ENCODE measurements at regions of chr1 and their contacts with region 1.

Region 1: DNA sequence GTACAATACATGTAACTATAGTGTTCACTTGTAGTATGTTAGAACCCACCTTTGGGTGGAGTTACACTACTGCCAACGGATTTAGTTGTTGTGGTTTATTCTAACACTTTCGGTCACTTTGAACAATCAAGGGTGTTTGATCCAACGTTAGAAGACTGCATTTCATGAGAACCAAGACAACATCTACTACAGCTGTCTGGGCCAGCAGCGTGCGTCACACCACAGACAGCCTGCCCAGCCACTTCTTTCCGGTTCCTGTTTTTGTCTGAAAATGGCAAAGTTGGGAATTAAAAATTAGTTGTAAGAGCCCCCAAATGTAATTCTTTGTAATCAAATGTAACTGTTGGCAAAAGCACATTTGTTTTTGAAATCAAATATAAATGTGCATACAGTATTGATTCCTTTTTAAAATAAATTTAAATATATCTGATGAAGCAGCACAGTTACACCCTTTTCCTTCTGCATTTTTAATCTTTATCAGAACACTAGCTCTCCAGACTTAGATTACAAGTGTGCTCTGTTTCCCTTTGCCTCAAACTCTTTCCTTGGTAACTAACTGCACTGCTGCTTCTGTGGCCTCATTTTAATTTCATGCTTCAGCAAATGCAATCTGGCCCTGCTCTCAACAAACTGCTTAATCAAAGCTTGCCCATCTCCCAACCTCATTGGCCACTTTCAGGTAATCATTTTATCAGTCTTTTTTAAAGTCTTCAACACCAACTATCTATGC is 86.6 kb upstream of the DPH5 start:
- DNase-seq: peak; percentile 84 to 91 (median 88)
- H3K4me3 ChIP-seq: peak overlapping the region in 1 of 2 donors; percentile 3
- H3K4me3 Mint-ChIP-seq: peak overlapping the region; percentile 52 to 87 (median 70)
- H3K27ac ChIP-seq: peak overlapping the region; percentile 60
- H3K27ac Mint-ChIP-seq: peak overlapping the region; percentile 91 to 100 (median 98)
- H3K4me1 ChIP-seq: peaks cover 42% of the 10 kb centered on the region
- H3K4me1 Mint-ChIP-seq: peaks cover 39 to 51% (median 47%) of the 10 kb centered on the region in 4 donors
- H3K27me3 ChIP-seq: no peaks in the 10 kb centered on the region
- H3K27me3 Mint-ChIP-seq: no peaks in the 10 kb centered on the region

Region 2: GRCh38 chr1:100928128-100928527 is 184.1 kb before region 1 on chr1:
- CTCF ChIA-PET with region 1: interaction called, 5 read pairs
- POLR2A ChIA-PET with region 1: interaction called, 12 read pairs
- intact Hi-C with region 1: loop called (anchors 2 kb)
- DNase-seq: no peak
- H3K4me3 ChIP-seq: peak overlapping the region in 1 of 2 donors; percentile 39
- H3K4me3 Mint-ChIP-seq: no peak overlapping the region
- H3K27ac ChIP-seq: peak overlapping the region; percentile 50
- H3K27ac Mint-ChIP-seq: no peak overlapping the region
- H3K4me1 ChIP-seq: peaks cover 95% of the 10 kb centered on the region
- H3K4me1 Mint-ChIP-seq: peaks cover 38 to 64% (median 49%) of the 10 kb centered on the region in 4 donors
- H3K27me3 ChIP-seq: no peaks in the 10 kb centered on the region
- H3K27me3 Mint-ChIP-seq: no peaks in the 10 kb centered on the region

Region 3: DNA sequence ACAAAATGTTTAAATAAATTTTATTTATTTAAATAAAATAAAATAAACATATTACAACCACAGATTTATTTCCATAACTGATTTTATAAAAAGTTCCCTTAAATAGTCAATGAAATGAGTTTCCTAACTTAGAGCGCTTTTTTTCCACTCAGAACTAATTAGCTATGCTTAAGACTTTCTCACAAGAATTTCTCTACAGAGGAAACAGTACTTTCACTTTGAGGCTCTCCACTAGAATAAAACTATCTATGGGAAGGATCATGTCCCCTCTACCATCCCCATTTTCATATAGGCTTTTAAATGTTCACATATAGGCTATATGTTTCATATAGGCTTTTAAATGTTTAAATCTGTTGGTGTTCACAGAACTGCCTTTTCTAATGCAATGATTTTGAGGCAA is 46.6 kb before region 1 on chr1:
- CTCF ChIA-PET with region 1: no interaction called
- POLR2A ChIA-PET with region 1: interaction called, 3 read pairs
- intact Hi-C with region 1: loop called (anchors 5 kb)
- DNase-seq: no peak
- H3K4me3 ChIP-seq: no peak overlapping the region
- H3K4me3 Mint-ChIP-seq: peak overlapping the region in 7 of 8 donors; percentile 8 to 74 (median 64)
- H3K27ac ChIP-seq: no peak overlapping the region
- H3K27ac Mint-ChIP-seq: peak overlapping the region; percentile 64 to 93 (median 85)
- H3K4me1 ChIP-seq: peaks cover 42% of the 10 kb centered on the region
- H3K4me1 Mint-ChIP-seq: peaks cover 35 to 57% (median 44%) of the 10 kb centered on the region in 4 donors
- H3K27me3 ChIP-seq: no peaks in the 10 kb centered on the region
- H3K27me3 Mint-ChIP-seq: no peaks in the 10 kb centered on the region

Region 4: GRCh38 chr1:101128211-101128727 is 16.1 kb after region 1 on chr1:
- CTCF ChIA-PET with region 1: interaction called, 4 read pairs
- POLR2A ChIA-PET with region 1: interaction called, 21 read pairs
- intact Hi-C with region 1: loop called (anchors 2 kb)
- DNase-seq: peak in 4 of 5 donors; percentile 17 to 42 (median 26)
- H3K4me3 ChIP-seq: no peak overlapping the region
- H3K4me3 Mint-ChIP-seq: peak overlapping the region; percentile 56 to 85 (median 72)
- H3K27ac ChIP-seq: peak overlapping the region; percentile 50
- H3K27ac Mint-ChIP-seq: peak overlapping the region; percentile 68 to 96 (median 89)
- H3K4me1 ChIP-seq: peaks cover 52% of the 10 kb centered on the region
- H3K4me1 Mint-ChIP-seq: peaks cover 45 to 73% (median 58%) of the 10 kb centered on the region in 4 donors
- H3K27me3 ChIP-seq: no peaks in the 10 kb centered on the region
- H3K27me3 Mint-ChIP-seq: no peaks in the 10 kb centered on the region

Region 5: DNA sequence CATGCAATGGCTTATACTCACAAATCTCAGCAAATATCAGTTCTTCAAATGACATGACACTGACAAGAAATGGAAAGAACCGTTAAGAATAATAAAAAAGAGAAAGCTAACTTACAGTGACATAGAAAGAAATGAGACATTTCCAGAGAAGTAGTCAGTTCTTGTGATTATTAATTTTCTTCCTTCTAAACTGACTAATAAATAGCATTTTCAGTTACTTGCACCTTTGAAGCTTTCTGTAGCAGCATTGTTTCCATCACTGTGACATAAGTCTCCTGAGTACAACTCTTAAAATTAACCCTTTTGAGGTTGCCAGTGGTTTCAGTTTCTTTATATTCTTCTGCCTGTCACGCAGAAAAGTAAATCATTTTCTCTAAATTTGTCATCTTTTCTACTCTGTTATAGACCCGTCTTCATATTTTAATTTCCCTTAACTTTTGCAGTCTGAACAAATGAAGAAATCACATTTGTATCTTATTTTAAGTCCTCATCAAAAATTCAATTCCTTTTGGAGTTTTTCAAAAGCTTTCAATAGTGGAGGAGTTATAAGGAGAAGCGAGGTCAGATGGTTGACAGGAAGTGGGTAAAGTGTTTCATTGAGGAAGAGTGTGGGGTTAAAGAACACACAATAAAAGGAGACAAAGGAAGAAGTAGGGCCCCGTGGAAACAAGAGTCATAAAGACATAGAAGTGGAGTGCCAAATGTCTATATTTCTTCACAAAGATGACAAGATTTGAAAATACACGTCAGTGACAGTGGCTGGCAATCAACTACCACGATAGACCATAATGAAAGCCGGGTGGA is 66.7 kb after region 1 on chr1:
- CTCF ChIA-PET with region 1: no interaction called
- POLR2A ChIA-PET with region 1: no interaction called
- intact Hi-C with region 1: loop called (anchors 2 kb)
- DNase-seq: peak; percentile 20 to 42 (median 26)
- H3K4me3 ChIP-seq: peak overlapping the region in 1 of 2 donors; percentile 18
- H3K4me3 Mint-ChIP-seq: peak overlapping the region; percentile 54 to 84 (median 75)
- H3K27ac ChIP-seq: peak overlapping the region; percentile 7
- H3K27ac Mint-ChIP-seq: peak overlapping the region; percentile 84 to 97 (median 86)
- H3K4me1 ChIP-seq: peaks cover 23% of the 10 kb centered on the region
- H3K4me1 Mint-ChIP-seq: peaks cover 20 to 45% (median 24%) of the 10 kb centered on the region in 4 donors
- H3K27me3 ChIP-seq: no peaks in the 10 kb centered on the region
- H3K27me3 Mint-ChIP-seq: no peaks in the 10 kb centered on the region